Activated CD8-positive, alpha-beta memory T cell treated with anti-CD3 and anti-CD28 coated beads, Interleukin-2, amount 10 ng/mL, durations not matched to agents 7 days and 5 days (primary cell): ENCODE measurements at regions of chr1 and their contacts with region 1.

Region 1: DNA sequence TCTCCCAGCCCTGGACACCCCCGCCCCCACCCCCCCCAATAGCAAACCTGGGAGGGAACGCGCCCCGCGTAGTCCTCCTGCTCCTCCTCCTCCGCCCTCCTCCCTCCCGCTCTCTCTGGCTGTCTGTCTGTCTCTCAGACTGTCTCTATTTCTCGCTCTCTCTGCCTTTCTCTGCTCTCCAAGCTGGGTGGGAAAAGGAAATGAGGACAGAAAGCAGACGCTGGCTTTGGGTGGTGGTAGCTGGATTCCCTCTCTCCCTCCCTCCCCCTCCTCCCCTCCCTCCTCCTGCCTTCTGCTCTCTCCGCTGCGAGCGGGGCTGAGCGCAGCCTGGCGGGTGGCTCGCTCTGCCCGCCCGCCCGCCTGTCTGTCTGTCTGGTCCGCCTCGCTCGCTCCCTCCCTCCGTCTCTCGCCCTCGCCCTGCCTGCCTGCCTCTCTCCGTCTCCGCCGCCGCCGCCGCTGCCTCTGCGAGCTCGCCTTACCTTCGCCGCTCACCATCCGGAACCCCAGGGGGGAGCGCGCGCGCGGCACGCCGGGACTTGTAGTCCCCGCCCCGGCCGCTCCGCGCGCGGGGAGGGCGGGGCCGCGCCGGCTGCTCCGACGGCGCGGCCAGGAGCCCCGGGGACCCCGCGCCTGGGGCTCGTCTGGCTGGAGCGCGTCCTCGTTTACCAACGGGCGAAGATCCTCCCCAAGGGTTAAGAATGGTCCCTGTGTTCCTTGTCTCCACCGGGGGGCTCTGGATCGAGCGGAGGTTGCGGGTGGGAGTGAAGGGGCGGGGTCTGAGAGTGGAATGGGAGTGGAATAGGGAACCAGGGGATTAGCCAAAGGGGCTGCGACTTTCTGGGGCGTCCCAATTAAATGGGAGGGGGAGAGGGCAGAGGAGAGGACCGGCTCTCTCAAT is at the start of gene AHDC1:
- DNase-seq: peak; percentile 93
- ATAC-seq: peak; percentile 90
- H3K4me3 Mint-ChIP-seq: peak within 1 kb of the TSS; percentile 94
- H3K27ac Mint-ChIP-seq: peak within 1 kb of the TSS; percentile 70
- H3K4me1 Mint-ChIP-seq: peaks cover 37% of the 10 kb centered on the region
- H3K27me3 Mint-ChIP-seq: no peaks in the 10 kb centered on the region
- total RNA-seq, gene AHDC1: 15.8 to 18.5 TPM

Region 2: GRCh38 chr1:27111626-27112573 is 492.0 kb before region 1 on chr1:
- CTCF ChIA-PET with region 1: no interaction called
- DNase-seq: peak; percentile 87
- ATAC-seq: peak; percentile 99
- H3K4me3 Mint-ChIP-seq: no peak overlapping the region
- H3K27ac Mint-ChIP-seq: peak overlapping the region; percentile 83
- H3K4me1 Mint-ChIP-seq: peaks cover 47% of the 10 kb centered on the region
- H3K27me3 Mint-ChIP-seq: no peaks in the 10 kb centered on the region

Region 3: GRCh38 chr1:27616441-27616840 is 12.5 kb after region 1 on chr1:
- CTCF ChIA-PET with region 1: interaction called, 40 read pairs
- DNase-seq: no peak
- ATAC-seq: no peak
- H3K4me3 Mint-ChIP-seq: no peak overlapping the region
- H3K27ac Mint-ChIP-seq: no peak overlapping the region
- H3K4me1 Mint-ChIP-seq: peaks cover 40% of the 10 kb centered on the region
- H3K27me3 Mint-ChIP-seq: no peaks in the 10 kb centered on the region